CD4-positive, alpha-beta T cell (primary cell): ENCODE measurements at regions of chr18 and their contacts with region 1.

Region 1: GRCh38 chr18:2776601-2777000 is 70.2 kb upstream of the EMILIN2 start:
- DNase-seq: no peak
- ATAC-seq: no peak
- H3K4me3 ChIP-seq: no peak overlapping the region
- H3K4me3 Mint-ChIP-seq: no peak overlapping the region
- H3K27ac ChIP-seq: no peak overlapping the region
- H3K27ac Mint-ChIP-seq: no peak overlapping the region
- H3K4me1 ChIP-seq: no peaks in the 10 kb centered on the region
- H3K4me1 Mint-ChIP-seq: peaks cover 7% of the 10 kb centered on the region
- H3K27me3 ChIP-seq: no peaks in the 10 kb centered on the region
- H3K27me3 Mint-ChIP-seq: no peaks in the 10 kb centered on the region
- CTCF ChIP-seq: no peak

Region 2: DNA sequence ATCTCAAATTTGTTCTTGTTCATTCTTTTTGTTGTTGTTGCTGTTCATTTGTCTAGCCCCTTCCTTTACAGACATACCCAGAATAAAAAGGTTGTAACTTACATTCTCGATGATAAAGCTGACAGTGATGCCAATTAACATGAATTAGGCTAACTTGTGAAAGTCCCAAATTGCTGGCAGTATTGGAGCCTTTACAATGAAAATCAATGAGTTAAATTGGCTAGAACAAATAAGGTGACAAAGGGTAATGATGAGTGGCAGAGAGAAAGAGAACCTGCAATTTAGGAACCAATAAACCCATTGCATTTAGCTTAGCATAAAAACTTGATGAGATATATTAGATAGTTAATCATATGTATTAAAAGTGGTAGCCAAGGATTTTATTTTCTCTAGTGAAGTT is 1350.9 kb before region 1 on chr18:
- CTCF ChIA-PET with region 1: no interaction called
- POLR2A ChIA-PET with region 1: no interaction called
- intact Hi-C with region 1: no loop called
- DNase-seq: no peak
- ATAC-seq: no peak
- H3K4me3 ChIP-seq: no peak overlapping the region
- H3K4me3 Mint-ChIP-seq: no peak overlapping the region
- H3K27ac ChIP-seq: no peak overlapping the region
- H3K27ac Mint-ChIP-seq: no peak overlapping the region
- H3K4me1 ChIP-seq: no peaks in the 10 kb centered on the region
- H3K4me1 Mint-ChIP-seq: no peaks in the 10 kb centered on the region
- H3K27me3 ChIP-seq: no peaks in the 10 kb centered on the region
- H3K27me3 Mint-ChIP-seq: no peaks in the 10 kb centered on the region
- CTCF ChIP-seq: no peak

Region 3: GRCh38 chr18:2482706-2483439 is 293.7 kb before region 1 on chr18:
- CTCF ChIA-PET with region 1: no interaction called
- POLR2A ChIA-PET with region 1: no interaction called
- intact Hi-C with region 1: no loop called
- DNase-seq: no peak
- ATAC-seq: no peak
- H3K4me3 ChIP-seq: no peak overlapping the region
- H3K4me3 Mint-ChIP-seq: no peak overlapping the region
- H3K27ac ChIP-seq: no peak overlapping the region
- H3K27ac Mint-ChIP-seq: no peak overlapping the region
- H3K4me1 ChIP-seq: no peaks in the 10 kb centered on the region
- H3K4me1 Mint-ChIP-seq: no peaks in the 10 kb centered on the region
- H3K27me3 ChIP-seq: peaks cover 2 to 10% of the 10 kb centered on the region in 2 experiments
- H3K27me3 Mint-ChIP-seq: peaks cover 64% of the 10 kb centered on the region
- CTCF ChIP-seq: no peak

Region 4: GRCh38 chr18:2692508-2692907 is 84.1 kb before region 1 on chr18:
- CTCF ChIA-PET with region 1: no interaction called
- POLR2A ChIA-PET with region 1: no interaction called
- intact Hi-C with region 1: loop called in 1 of 2 experiments (anchors 10 kb)
- DNase-seq: no peak
- ATAC-seq: no peak
- H3K4me3 ChIP-seq: no peak overlapping the region
- H3K4me3 Mint-ChIP-seq: no peak overlapping the region
- H3K27ac ChIP-seq: no peak overlapping the region
- H3K27ac Mint-ChIP-seq: peak overlapping the region; percentile 1
- H3K4me1 ChIP-seq: peaks cover 14% of the 10 kb centered on the region
- H3K4me1 Mint-ChIP-seq: peaks cover 49% of the 10 kb centered on the region
- H3K27me3 ChIP-seq: no peaks in the 10 kb centered on the region
- H3K27me3 Mint-ChIP-seq: no peaks in the 10 kb centered on the region
- CTCF ChIP-seq: no peak

Region 5: GRCh38 chr18:2716394-2717326 is 59.9 kb before region 1 on chr18:
- CTCF ChIA-PET with region 1: no interaction called
- POLR2A ChIA-PET with region 1: no interaction called
- intact Hi-C with region 1: no loop called
- DNase-seq: no peak
- ATAC-seq: no peak
- H3K4me3 ChIP-seq: no peak overlapping the region
- H3K4me3 Mint-ChIP-seq: no peak overlapping the region
- H3K27ac ChIP-seq: no peak overlapping the region
- H3K27ac Mint-ChIP-seq: peak overlapping the region; percentile 59
- H3K4me1 ChIP-seq: peaks cover 9% of the 10 kb centered on the region
- H3K4me1 Mint-ChIP-seq: peaks cover 68% of the 10 kb centered on the region
- H3K27me3 ChIP-seq: no peaks in the 10 kb centered on the region
- H3K27me3 Mint-ChIP-seq: no peaks in the 10 kb centered on the region
- CTCF ChIP-seq: no peak

Region 6: GRCh38 chr18:2729757-2730156 is 46.8 kb before region 1 on chr18:
- CTCF ChIA-PET with region 1: no interaction called
- POLR2A ChIA-PET with region 1: interaction called, 3 read pairs
- intact Hi-C with region 1: loop called in 1 of 2 experiments (anchors 5 kb)
- DNase-seq: no peak
- ATAC-seq: no peak
- H3K4me3 ChIP-seq: no peak overlapping the region
- H3K4me3 Mint-ChIP-seq: no peak overlapping the region
- H3K27ac ChIP-seq: no peak overlapping the region
- H3K27ac Mint-ChIP-seq: no peak overlapping the region
- H3K4me1 ChIP-seq: no peaks in the 10 kb centered on the region
- H3K4me1 Mint-ChIP-seq: peaks cover 14% of the 10 kb centered on the region
- H3K27me3 ChIP-seq: no peaks in the 10 kb centered on the region
- H3K27me3 Mint-ChIP-seq: no peaks in the 10 kb centered on the region
- CTCF ChIP-seq: no peak

Region 7: DNA sequence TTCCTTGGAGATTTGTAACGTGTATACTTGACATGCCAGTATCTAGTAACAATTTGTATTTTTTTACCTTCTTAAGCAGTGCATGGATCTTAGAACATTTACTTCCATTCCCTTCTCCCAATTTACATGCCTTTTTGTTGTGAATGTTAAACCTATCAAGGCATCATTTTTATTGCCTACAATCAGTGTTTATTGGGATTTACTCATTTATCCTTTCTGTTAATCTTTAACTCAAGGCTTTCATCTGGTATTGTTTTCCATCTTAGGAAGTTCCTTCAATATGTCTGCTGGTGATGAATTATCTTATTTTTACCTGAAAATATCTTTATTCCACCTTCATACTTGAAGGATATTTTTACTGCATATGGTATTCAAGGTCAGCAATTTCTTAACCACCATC is 18.3 kb before region 1 on chr18:
- CTCF ChIA-PET with region 1: interaction called, 3 read pairs
- POLR2A ChIA-PET with region 1: no interaction called
- intact Hi-C with region 1: loop called in 1 of 2 experiments (anchors 1 kb)
- DNase-seq: no peak
- ATAC-seq: no peak
- H3K4me3 ChIP-seq: no peak overlapping the region
- H3K4me3 Mint-ChIP-seq: no peak overlapping the region
- H3K27ac ChIP-seq: no peak overlapping the region
- H3K27ac Mint-ChIP-seq: peak overlapping the region; percentile 34
- H3K4me1 ChIP-seq: no peaks in the 10 kb centered on the region
- H3K4me1 Mint-ChIP-seq: peaks cover 27% of the 10 kb centered on the region
- H3K27me3 ChIP-seq: no peaks in the 10 kb centered on the region
- H3K27me3 Mint-ChIP-seq: no peaks in the 10 kb centered on the region
- CTCF ChIP-seq: no peak

Region 8: DNA sequence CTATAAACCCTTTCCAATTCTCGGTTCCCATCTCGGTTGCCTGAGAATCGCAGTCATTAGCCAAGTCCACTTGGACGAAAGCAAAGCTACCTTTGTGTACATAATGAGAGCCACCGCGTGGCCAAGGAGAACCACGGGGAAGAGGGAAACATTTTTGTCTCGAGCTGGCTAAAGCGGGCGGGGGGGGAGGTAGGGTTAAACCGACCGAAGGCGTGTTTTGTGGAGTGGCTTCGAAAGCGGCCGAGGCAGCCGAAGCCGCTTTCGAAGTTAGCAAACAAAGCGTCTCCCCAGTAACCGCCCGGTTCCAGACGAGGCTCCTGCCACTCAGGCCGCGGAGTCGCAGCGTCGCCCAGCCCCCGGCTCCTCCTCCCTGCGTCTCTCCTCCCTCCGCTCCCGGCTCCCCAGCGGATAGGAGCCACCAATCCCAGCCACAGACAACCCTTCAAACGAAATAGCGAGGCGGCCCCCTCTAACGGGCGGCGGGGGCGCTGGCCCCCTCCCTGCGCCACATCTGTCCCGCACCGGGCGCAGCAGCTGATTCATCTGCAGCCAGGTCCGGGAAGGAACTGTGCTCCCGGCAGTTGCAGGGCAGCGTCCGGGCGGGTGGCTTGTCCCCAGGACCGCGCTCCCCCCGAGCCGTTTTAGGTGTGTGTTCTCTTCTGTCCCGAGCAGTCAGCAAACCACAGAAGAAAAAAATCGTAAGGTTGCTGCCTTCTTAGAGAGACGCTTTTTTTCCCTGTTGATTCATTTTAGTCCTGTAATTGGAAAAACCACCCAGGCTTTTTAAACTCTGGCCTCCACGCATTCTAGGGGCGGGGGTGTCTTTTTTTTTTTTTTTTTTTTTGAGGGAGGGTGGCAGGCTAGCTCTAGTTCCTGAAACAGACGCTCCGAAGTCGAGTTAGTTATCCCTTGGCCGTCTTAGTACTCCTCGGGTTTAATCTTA is 671.6 kb after region 1 on chr18:
- CTCF ChIA-PET with region 1: no interaction called
- POLR2A ChIA-PET with region 1: no interaction called
- intact Hi-C with region 1: no loop called
- DNase-seq: peak; percentile 74 to 95 (median 84)
- ATAC-seq: peak; percentile 52
- H3K4me3 ChIP-seq: peak overlapping the region; percentile 90
- H3K4me3 Mint-ChIP-seq: peak overlapping the region; percentile 95
- H3K27ac ChIP-seq: peak overlapping the region; percentile 94 to 98
- H3K27ac Mint-ChIP-seq: peak overlapping the region; percentile 99
- H3K4me1 ChIP-seq: peaks cover 48% of the 10 kb centered on the region
- H3K4me1 Mint-ChIP-seq: peaks cover 47% of the 10 kb centered on the region
- H3K27me3 ChIP-seq: no peaks in the 10 kb centered on the region
- H3K27me3 Mint-ChIP-seq: peaks cover 5% of the 10 kb centered on the region
- CTCF ChIP-seq: no peak